Right ventricle myocardium inferior (tissue), 1 donor: ENCODE measurements at regions of chr17 and their contacts with region 1.

Region 1: GRCh38 chr17:7329374-7329996 is 350 bp upstream of the NEURL4 start:
- DNase-seq: peak; percentile 99
- ATAC-seq: peak; percentile 94

Region 2: GRCh38 chr17:7314719-7315569 is 14.5 kb before region 1 on chr17 and contains the start of gene GPS2:
- intact Hi-C with region 1: loop called (anchors 1 kb)
- DNase-seq: peak; percentile 98
- ATAC-seq: peak; percentile 86
- total RNA-seq, gene GPS2: 70.3 TPM

Region 3: GRCh38 chr17:7583253-7584109 is 254.0 kb after region 1 on chr17 and contains the start of gene MPDU1:
- intact Hi-C with region 1: loop called (anchors 10 kb)
- DNase-seq: peak; percentile 98
- ATAC-seq: peak; percentile 87
- total RNA-seq, gene MPDU1: 32.0 TPM